ENCODE measurements at regions of chr1 and their contacts with region 1.

Region 1: DNA sequence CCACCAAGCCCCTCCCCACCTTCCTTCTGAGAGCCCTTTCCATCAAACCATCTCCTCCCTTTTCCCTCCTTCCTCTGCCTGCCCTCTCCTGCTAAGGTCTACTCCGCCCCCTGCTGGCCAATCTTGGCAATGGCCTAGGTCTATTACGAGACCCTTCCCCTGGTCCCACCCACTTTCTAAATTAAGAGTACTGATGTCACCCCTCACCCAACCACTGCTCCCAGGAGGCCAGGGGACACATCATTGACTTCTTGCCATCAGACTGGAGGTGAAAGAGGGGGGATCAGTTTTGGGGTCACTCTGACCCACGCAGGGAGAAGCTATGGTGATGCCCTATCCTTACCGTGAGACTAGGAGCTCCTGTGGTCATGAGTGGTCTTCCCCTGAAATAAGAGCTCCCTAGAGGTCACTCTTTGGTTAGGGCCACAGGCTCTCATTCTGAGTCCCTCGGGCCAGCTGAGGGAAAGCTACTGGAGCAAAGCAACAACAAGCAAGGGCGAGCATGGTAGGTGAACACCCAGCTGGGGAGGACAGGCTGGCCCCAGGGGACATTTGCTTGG is 34.6 kb upstream of the S100A7 start:
- DNase-seq: peak; percentile 35 to 67
- ATAC-seq: no peak
- H3K4me3 ChIP-seq: no peak overlapping the region
- H3K27ac ChIP-seq: no peak overlapping the region
- H3K4me1 ChIP-seq: peaks cover 13 to 14% of the 10 kb centered on the region in 2 donors
- H3K27me3 ChIP-seq: no peaks in the 10 kb centered on the region
- CTCF ChIP-seq: peak; percentile 91 to 97 (median 94)
- POLR2A ChIP-seq: no peak

Region 2: DNA sequence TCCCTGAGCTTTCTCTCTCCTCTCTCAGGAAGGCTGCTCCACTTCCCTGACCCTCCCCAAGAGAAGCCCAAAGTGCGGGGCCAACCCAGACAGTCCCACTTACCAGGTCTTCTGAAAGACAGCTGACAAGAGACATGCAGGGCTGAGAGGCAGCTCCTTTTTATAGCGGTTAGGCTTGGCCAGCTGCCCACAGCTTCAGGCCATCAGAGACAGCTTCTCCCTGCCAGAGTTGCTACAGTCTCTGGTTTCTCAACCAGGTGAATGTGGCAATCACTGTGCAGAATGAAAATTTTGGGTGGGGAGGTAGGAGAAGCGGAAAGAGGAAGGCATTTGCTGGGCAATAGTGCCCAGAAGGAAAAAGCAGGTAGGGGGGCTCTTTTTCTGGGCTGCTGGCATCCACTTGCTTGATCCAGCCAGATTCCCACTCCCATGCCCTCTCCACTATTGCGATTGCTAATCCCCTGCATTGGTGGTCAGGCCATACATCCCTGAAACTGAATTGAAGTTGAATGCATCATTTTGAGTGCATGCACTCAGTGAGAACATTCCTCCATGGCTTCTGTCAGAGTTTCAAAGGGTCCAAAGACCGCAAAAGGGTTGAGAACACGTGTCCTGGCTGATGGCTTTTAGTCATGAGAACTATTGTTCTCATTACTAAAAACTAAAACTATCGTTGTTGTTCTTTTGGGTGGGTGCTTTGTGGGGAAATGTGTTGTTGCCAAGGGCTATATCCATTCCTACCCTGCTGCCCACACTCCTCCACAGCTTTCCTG is 103.9 kb before region 1 on chr1 and contains the start of gene S100A8:
- in situ Hi-C with region 1: no loop called
- intact Hi-C with region 1: loop called (anchors 2 kb)
- DNase-seq: peak; percentile 83 to 90
- ATAC-seq: peak; percentile 89
- H3K4me3 ChIP-seq: peak within 1 kb of the TSS in 1 of 4 donors; percentile 8
- H3K27ac ChIP-seq: peak within 1 kb of the TSS in 3 of 4 donors; percentile 44 to 66 (median 63)
- H3K4me1 ChIP-seq: peaks cover 13 to 40% of the 10 kb centered on the region in 2 donors
- H3K27me3 ChIP-seq: no peaks in the 10 kb centered on the region
- CTCF ChIP-seq: no peak
- POLR2A ChIP-seq: peak; percentile 10 to 35
- total RNA-seq, gene S100A8: 4.2 to 41.6 (median 12.5) TPM

Region 3: GRCh38 chr1:153465811-153466636 is 29.0 kb before region 1 on chr1:
- in situ Hi-C with region 1: no loop called
- intact Hi-C with region 1: loop called (anchors 1 kb)
- DNase-seq: peak in 1 of 2 donors; percentile 37
- ATAC-seq: peak; percentile 77 to 86
- H3K4me3 ChIP-seq: no peak overlapping the region
- H3K27ac ChIP-seq: no peak overlapping the region
- H3K4me1 ChIP-seq: peaks cover 4 to 7% of the 10 kb centered on the region in 2 donors
- H3K27me3 ChIP-seq: peaks cover 0 to 4% (median 3%) of the 10 kb centered on the region in 3 donors
- CTCF ChIP-seq: peak; percentile 69 to 90 (median 85)
- POLR2A ChIP-seq: no peak

Region 4: GRCh38 chr1:153566440-153567379 is 71.7 kb after region 1 on chr1:
- in situ Hi-C with region 1: no loop called
- intact Hi-C with region 1: loop called (anchors 1 kb)
- DNase-seq: peak; percentile 98 to 100
- ATAC-seq: peak; percentile 78 to 84
- H3K4me3 ChIP-seq: peak overlapping the region in 1 of 4 donors; percentile 8
- H3K27ac ChIP-seq: peak overlapping the region; percentile 87 to 94 (median 92)
- H3K4me1 ChIP-seq: peaks cover 27 to 38% of the 10 kb centered on the region in 2 donors
- H3K27me3 ChIP-seq: no peaks in the 10 kb centered on the region
- CTCF ChIP-seq: no peak
- POLR2A ChIP-seq: peak; percentile 48 to 53

Region 5: DNA sequence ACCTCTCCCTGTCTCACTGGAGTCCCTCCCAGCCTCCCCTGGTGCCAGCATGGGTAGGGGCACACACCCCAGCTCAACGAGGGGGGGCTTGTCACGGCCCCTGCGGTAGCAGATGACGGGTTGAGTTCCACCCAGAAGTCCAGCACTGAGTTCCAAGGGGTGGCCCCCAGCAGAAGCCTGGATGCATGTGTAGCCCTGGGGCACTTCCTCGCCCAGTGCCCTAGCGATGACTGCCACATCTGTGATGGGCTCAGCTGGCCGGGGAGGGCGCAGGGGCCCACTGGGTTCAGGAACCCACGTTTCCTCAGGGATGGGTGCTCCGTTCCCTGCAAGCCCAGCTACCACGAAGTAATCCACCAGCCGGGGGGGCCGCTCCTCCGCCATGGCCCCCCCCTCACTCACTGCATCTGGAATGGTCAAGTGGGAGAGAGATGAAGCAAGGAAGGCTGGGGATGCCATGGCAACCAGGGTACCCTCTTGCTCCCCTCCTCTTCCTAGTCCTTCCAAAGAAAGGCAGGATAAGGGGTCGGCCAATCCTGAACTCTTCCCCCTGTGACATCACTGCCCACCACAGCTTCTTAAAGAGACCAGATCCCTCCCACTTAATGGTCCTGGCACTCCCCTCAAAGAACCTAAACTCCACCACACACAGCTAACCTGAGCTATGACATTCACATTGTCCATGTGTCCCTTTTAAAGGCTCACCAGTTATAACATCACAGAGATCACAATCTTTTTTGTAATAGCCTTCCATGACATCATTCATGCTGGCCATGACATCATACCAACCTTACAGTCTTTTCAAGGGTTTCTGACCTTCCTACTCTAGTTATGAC is 449.2 kb after region 1 on chr1:
- in situ Hi-C with region 1: no loop called
- intact Hi-C with region 1: no loop called
- DNase-seq: no peak
- ATAC-seq: no peak
- H3K4me3 ChIP-seq: peak overlapping the region in 2 of 4 donors; percentile 70 to 81
- H3K27ac ChIP-seq: peak overlapping the region; percentile 98 to 99 (median 98)
- H3K4me1 ChIP-seq: peaks cover 15 to 31% of the 10 kb centered on the region in 2 donors
- H3K27me3 ChIP-seq: no peaks in the 10 kb centered on the region
- CTCF ChIP-seq: no peak
- POLR2A ChIP-seq: no peak